B cell (primary cell): ENCODE measurements at regions of chr1 and their contacts with region 1.

Region 1: GRCh38 chr1:171256940-171257606 is 8.8 kb downstream of the FMO1 start:
- DNase-seq: no peak
- ATAC-seq: no peak
- H3K4me3 ChIP-seq: no peak overlapping the region
- H3K4me3 Mint-ChIP-seq: no peak overlapping the region
- H3K27ac ChIP-seq: no peak overlapping the region
- H3K27ac Mint-ChIP-seq: no peak overlapping the region
- H3K4me1 ChIP-seq: peaks cover 8 to 10% of the 10 kb centered on the region in 2 donors
- H3K4me1 Mint-ChIP-seq: peaks cover 10% of the 10 kb centered on the region
- H3K27me3 ChIP-seq: peaks cover 0 to 3% (median 3%) of the 10 kb centered on the region in 4 experiments
- H3K27me3 Mint-ChIP-seq: peaks cover 15% of the 10 kb centered on the region
- CTCF ChIP-seq: no peak

Region 2: DNA sequence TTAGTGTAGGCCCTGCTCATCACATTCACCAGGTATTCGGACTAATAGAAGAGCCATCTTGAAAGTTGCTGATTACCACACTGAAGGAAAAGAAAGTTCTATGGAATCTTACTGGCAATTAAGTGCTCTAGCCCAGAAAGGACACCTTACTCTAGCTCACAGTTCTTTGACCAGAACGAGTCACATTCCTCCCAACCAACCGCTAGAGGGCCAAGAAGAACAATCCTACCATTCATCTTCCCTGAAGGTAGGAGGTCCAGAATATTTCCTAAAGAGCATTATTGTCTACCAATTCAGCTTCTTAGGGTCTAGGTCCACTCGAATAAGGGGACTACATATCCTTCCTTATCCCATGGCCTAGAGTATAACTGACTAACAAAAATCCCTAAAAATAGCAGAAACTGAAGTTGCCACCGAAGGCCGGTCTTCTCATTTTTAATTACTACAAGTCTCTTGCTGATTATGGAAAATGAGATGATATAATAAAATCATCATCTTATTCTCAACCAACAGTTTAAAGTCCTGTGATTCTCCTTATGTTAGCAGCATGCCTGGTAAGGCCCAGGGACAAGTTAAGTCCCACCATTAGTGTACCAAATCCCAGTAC is 11.5 kb before region 1 on chr1:
- CTCF ChIA-PET with region 1: interaction called, 13 read pairs
- POLR2A ChIA-PET with region 1: no interaction called
- intact Hi-C with region 1: no loop called
- DNase-seq: peak; percentile 45
- ATAC-seq: peak; percentile 33
- H3K4me3 ChIP-seq: no peak overlapping the region
- H3K4me3 Mint-ChIP-seq: no peak overlapping the region
- H3K27ac ChIP-seq: no peak overlapping the region
- H3K27ac Mint-ChIP-seq: no peak overlapping the region
- H3K4me1 ChIP-seq: no peaks in the 10 kb centered on the region
- H3K4me1 Mint-ChIP-seq: no peaks in the 10 kb centered on the region
- H3K27me3 ChIP-seq: peaks cover 0 to 7% (median 0%) of the 10 kb centered on the region in 4 experiments
- H3K27me3 Mint-ChIP-seq: peaks cover 19% of the 10 kb centered on the region
- CTCF ChIP-seq: peak; percentile 81